Right ventricle myocardium inferior (tissue), 1 donor: ENCODE measurements at regions of chr14 and their contacts with region 1.

Region 1: DNA sequence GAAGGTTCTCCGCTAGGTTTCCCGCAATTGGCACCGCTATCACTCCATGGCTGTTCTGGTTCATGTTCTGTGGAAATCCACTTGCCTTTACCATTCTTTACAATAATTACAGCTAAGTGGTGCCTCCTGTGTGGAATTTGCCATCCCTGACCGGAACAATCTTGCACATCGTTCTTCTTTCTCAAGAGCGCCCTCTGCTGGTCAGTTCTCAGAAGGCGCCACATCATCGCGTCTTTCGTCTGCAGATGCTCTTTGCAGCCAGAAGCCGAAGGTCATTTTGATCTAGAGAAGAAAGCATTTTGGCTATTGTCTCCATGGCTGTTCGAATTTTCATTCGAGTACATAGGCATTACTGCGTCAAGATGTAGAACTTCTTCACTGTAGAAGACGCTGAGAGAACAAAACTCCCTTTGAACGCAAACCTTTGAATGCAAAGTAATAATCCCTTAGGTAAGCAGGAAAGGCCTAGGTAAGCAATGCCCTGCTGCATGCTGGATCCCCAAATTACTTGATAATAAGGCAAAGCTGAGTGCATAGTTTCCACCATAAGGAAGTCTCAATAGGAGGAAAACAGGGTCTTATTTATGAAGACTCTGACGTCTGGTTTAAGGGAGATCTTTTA is 10.1 kb upstream of the RTRAF start:
- DNase-seq: peak; percentile 84
- ATAC-seq: peak; percentile 75

Region 2: GRCh38 chr14:51283402-51284085 is 695.7 kb before region 1 on chr14:
- intact Hi-C with region 1: loop called (anchors 2 kb)
- DNase-seq: no peak
- ATAC-seq: peak; percentile 88

Region 3: DNA sequence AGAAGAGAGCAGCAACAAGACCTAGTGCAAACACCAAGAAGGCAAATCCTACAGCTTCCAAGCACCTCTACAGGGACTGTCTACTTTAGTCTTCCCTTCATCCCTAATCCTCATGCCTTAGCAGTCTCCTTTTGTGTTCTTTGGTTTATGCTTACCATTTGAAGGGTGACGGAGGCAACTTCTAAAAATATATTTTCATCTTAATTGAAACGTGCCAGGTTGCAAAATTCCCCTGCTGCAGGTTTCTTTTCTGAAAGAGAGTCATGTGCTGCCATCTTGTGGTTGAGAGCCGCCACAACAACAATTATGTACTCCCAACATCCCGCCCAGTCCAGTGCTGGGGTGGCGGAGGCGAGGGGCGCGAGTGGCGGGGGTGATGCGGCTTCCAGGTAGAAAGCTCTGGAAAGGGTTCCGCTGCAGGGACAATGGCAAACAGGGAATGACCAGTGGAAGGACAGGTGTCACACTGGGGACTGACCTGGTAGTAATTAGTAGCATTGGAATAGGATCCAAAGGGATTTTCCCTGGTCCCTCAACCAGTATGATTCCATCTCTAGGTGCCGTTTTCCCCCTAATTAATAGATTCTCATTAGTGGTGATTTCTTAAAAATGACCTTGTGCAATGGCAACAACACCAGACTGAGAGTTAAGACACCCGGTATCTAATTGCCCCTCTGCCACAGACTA is 199.1 kb before region 1 on chr14:
- intact Hi-C with region 1: loop called (anchors 5 kb)
- DNase-seq: peak; percentile 75
- ATAC-seq: peak; percentile 53

Region 4: GRCh38 chr14:51860164-51860824 is 118.9 kb before region 1 on chr14 and contains the start of gene GNG2:
- intact Hi-C with region 1: loop called (anchors 5 kb)
- DNase-seq: peak; percentile 95
- ATAC-seq: peak; percentile 99
- total RNA-seq, gene GNG2: 15.5 TPM

Region 5: GRCh38 chr14:51873221-51873893 is 105.8 kb before region 1 on chr14:
- intact Hi-C with region 1: no loop called
- DNase-seq: no peak
- ATAC-seq: peak; percentile 70

Region 6: GRCh38 chr14:52399921-52400611 is 420.9 kb after region 1 on chr14:
- intact Hi-C with region 1: no loop called
- DNase-seq: no peak
- ATAC-seq: no peak

Region 7: DNA sequence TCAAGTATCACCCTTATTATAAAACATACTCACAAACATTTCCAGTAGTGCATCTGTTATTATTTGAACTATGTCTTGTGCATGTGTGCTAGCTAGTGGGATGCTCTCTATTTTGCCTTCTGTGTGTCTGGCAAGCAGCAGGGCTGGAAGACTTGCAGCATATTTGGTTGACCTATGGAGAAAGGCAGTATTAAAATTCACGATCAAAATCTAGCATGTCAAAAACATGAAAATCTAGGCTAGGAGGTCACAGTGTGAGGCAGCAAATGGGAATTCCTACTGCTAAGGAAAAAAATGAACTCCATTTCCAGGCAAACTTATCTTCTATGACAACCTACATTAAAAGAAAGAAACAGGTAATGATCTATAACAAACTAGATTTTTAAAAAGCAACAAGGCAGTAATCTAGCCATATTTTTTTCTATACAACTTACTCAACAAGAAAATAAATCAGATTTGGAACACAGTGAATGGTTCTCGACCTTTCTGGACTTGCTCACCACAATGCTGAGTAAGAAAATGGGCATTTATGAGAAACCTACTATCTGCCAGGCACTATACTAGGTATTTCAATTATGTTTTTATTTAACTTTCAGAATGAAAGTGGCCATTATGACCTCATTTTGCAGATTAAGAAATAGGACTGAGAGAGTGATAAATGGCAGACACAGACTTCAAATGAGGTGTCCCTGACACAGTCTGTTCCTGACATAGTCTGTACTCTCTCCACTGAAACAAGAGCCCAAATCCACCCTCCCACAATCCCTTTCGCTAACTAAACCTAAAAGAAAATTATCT is 476.3 kb after region 1 on chr14:
- intact Hi-C with region 1: no loop called
- DNase-seq: no peak
- ATAC-seq: no peak